Heart left ventricle (tissue), 16 donors: ENCODE measurements at regions of chr18 and their contacts with region 1.

Region 1: DNA sequence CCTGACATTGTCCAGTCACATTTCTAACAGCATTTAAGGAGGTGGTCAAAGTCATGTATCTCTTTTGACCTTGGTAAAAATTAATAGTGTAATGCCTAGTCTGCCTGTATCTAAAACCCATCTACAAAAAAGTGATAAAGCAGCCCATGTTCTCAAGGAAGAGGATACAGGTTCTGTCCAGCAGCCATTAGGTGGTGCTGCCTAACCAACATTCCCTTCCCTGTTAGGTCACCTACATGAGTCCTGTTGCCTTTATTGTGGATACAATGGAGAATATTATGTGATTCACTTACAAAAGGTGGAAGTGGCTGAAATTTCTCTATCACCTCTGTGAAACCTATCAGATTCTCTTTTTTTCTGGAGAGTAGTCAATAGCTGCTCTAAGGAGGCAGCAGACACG is 52.5 kb downstream of the AQP4 start:
- DNase-seq: peak in 2 of 5 donors; percentile 22 to 25
- ATAC-seq: peak in 2 of 4 donors; percentile 74 to 75
- H3K4me3 ChIP-seq: no peak overlapping the region
- H3K27ac ChIP-seq: no peak overlapping the region
- H3K4me1 ChIP-seq: no peaks in the 10 kb centered on the region
- H3K27me3 ChIP-seq: peaks cover 0 to 7% (median 0%) of the 10 kb centered on the region in 9 donors
- CTCF ChIP-seq: peak; percentile 37 to 67 (median 58)
- POLR2A ChIP-seq: no peak

Region 2: DNA sequence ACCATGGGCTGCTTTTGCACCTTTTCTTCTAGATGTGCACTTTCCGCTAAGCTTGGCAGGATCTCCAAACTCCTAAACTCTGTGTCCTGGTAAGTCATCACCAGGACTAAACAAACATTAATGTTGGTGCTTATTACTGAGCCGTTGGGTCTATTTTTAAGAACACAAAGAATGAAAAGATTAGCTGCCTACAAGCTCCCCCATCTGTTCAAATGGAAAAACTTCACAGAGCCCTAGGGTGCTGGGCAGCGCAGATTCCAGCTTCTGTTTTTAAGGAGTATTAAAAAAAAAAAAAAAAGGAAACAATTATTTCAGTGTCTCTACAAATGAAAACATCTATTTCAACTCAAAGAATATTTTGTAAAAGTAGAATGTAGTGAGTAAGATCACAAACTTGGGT is 150.2 kb after region 1 on chr18:
- intact Hi-C with region 1: loop called (anchors 2 to 10 kb)
- DNase-seq: no peak
- ATAC-seq: peak in 3 of 4 donors; percentile 52 to 56 (median 54)
- H3K4me3 ChIP-seq: no peak overlapping the region
- H3K27ac ChIP-seq: no peak overlapping the region
- H3K4me1 ChIP-seq: peaks cover 0 to 9% (median 0%) of the 10 kb centered on the region in 12 donors
- H3K27me3 ChIP-seq: no peaks in the 10 kb centered on the region
- CTCF ChIP-seq: peak; percentile 9 to 51 (median 35)
- POLR2A ChIP-seq: no peak

Region 3: DNA sequence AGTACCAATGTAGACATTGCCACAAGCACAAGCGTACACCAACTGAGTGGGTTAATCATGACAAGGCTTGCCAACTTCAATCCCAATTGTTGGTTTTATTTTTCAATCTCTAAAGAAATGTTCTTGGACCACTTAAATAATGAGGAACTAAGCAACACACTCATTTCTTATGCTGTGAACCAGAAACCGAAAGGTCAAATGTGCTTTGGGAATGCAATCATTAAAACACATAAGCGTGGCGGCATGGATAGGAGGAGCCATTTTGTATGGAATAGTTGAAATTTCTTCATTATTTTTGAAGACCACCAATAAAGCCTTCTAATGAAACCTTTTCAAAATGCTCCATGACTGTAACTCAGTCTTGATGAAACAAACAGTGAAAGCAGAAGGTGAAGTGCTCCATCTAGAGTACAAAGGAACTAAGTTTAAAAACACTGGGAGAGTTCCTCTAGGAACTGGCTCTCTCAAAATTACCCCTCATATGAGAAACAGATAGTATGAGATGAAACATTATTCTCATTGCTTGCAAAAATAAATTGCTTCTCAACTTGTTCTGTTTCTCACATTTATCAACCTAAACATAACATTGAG is 485.3 kb after region 1 on chr18:
- intact Hi-C with region 1: loop called in 2 of 10 experiments (anchors 5 to 10 kb)
- DNase-seq: no peak
- ATAC-seq: peak in 3 of 4 donors; percentile 52 to 67 (median 65)
- H3K4me3 ChIP-seq: no peak overlapping the region
- H3K27ac ChIP-seq: no peak overlapping the region
- H3K4me1 ChIP-seq: no peaks in the 10 kb centered on the region
- H3K27me3 ChIP-seq: no peaks in the 10 kb centered on the region
- CTCF ChIP-seq: peak in 11 of 12 donors; percentile 15 to 56 (median 46)
- POLR2A ChIP-seq: no peak

Region 4: DNA sequence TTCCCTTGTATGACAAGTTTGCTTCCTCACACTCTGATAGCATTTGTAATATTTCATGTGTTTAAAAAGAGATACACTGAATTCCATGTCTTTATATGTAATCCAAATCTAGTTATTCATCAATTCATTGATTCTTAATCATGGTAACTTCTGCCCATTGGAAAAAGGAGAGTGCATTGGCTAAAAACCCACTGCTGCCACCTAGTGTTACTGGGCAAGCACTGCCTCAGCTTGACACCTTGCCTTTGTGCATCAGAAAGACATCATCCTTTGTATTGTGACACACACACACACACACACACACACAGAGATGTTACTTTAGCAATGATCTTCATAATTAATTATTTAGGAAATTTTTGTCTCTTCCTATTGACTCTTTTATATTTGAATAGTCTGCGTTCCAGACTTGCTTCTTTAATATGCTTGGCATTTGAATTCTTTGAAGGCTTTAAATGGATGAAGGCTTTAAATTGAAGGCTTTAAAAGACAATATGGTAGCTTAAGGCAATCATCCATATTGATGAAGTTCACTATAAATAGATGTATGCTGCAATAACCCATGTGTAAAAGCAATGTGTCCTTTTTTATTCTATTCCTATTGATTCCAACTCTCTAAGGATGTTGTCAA is 786.3 kb after region 1 on chr18:
- intact Hi-C with region 1: loop called in 2 of 10 experiments (anchors 2 to 10 kb)
- DNase-seq: peak in 3 of 5 donors; percentile 14 to 39 (median 26)
- ATAC-seq: no peak
- H3K4me3 ChIP-seq: no peak overlapping the region
- H3K27ac ChIP-seq: no peak overlapping the region
- H3K4me1 ChIP-seq: no peaks in the 10 kb centered on the region
- H3K27me3 ChIP-seq: no peaks in the 10 kb centered on the region
- CTCF ChIP-seq: peak; percentile 51 to 87 (median 74)
- POLR2A ChIP-seq: no peak

Region 5: DNA sequence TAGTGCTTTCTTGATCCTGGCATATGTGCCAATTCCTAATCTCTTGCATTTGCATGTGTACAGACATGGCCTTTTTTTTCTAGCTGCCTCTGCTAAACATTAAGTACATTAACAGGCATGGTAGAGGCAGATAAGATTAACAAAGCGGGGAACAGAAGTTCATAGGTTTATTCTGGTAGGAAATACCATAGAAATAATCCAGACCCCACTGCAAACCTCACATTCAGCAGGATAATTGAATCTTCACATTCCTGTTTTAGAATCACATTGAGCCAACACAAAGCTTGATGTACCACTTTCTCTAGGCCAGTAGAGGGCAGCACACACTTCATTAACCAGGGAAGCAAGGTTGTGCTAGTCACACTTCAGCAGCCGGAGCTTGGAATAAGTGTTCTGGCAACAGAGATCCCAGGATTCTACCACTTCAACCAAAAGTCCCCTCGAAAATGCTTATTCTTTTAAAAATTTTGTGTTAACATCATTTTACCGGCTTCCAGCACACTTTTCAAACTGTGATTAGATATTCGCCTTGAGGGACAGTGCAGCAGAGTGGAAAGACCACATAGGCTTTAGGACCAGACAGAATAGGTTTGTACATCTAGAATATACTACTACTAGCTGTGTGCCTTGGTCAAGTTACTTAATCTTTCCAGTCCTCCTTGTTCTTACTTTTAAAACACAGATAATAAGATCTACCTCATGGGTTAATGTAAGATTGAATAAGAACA is 792.2 kb after region 1 on chr18:
- intact Hi-C with region 1: loop called in 1 of 10 experiments (anchors 10 kb)
- DNase-seq: peak in 4 of 5 donors; percentile 33 to 56 (median 46)
- ATAC-seq: peak in 3 of 4 donors; percentile 86 to 94 (median 86)
- H3K4me3 ChIP-seq: no peak overlapping the region
- H3K27ac ChIP-seq: no peak overlapping the region
- H3K4me1 ChIP-seq: no peaks in the 10 kb centered on the region
- H3K27me3 ChIP-seq: no peaks in the 10 kb centered on the region
- CTCF ChIP-seq: peak; percentile 67 to 87 (median 72)
- POLR2A ChIP-seq: no peak